Colonic mucosa (tissue), 4 donors: ENCODE measurements at regions of chr13 and their contacts with region 1.

Region 1: GRCh38 chr13:69579351-69579750 is 528.3 kb upstream of the ATXN8OS start:
- DNase-seq: no peak
- H3K4me3 ChIP-seq: no peak overlapping the region
- H3K27ac ChIP-seq: no peak overlapping the region
- H3K4me1 ChIP-seq: no peaks in the 10 kb centered on the region
- H3K27me3 ChIP-seq: no peaks in the 10 kb centered on the region
- CTCF ChIP-seq: peak; percentile 30

Region 2: GRCh38 chr13:68588623-68589022 is 990.7 kb before region 1 on chr13:
- intact Hi-C with region 1: no loop called
- DNase-seq: no peak
- H3K4me3 ChIP-seq: no peak overlapping the region
- H3K27ac ChIP-seq: no peak overlapping the region
- H3K4me1 ChIP-seq: no peaks in the 10 kb centered on the region
- H3K27me3 ChIP-seq: no peaks in the 10 kb centered on the region
- CTCF ChIP-seq: no peak

Region 3: GRCh38 chr13:69373747-69374425 is 205.5 kb before region 1 on chr13:
- intact Hi-C with region 1: no loop called
- DNase-seq: no peak
- H3K4me3 ChIP-seq: no peak overlapping the region
- H3K27ac ChIP-seq: no peak overlapping the region
- H3K4me1 ChIP-seq: no peaks in the 10 kb centered on the region
- H3K27me3 ChIP-seq: no peaks in the 10 kb centered on the region
- CTCF ChIP-seq: no peak

Region 4: GRCh38 chr13:69545551-69545950 is 33.8 kb before region 1 on chr13:
- intact Hi-C with region 1: no loop called
- DNase-seq: no peak
- H3K4me3 ChIP-seq: no peak overlapping the region
- H3K27ac ChIP-seq: no peak overlapping the region
- H3K4me1 ChIP-seq: no peaks in the 10 kb centered on the region
- H3K27me3 ChIP-seq: no peaks in the 10 kb centered on the region
- CTCF ChIP-seq: no peak

Region 5: DNA sequence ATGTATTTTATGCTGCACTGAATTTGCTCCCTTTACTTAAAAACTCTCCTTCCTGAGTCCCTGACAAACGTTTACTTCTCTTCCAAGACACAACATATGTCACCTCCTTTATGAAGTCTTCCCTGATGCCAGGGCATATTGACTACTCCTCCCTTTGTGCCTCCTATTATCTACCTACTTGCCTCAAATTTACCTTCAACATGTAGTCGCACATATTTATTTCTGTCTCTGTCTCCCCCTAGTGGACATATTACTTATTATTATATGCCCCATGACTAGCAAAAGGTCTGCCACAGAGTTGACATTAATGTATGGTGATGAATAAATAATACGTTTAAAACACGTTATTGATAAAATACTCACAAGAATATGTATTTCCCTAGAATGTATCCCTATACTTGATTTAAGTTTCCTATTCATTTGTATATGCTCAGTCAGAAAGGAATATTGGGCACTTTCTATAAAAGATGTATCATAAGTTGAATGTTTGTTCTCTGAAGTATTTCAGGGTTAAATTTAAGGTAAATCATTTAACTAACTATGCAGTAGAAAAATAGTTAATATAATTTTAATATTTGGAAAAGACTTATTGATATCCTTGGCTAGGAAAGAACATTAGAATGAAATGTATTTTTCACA is 278.0 kb after region 1 on chr13:
- intact Hi-C with region 1: loop called (anchors 5 kb)
- DNase-seq: no peak
- H3K4me3 ChIP-seq: no peak overlapping the region
- H3K27ac ChIP-seq: no peak overlapping the region
- H3K4me1 ChIP-seq: no peaks in the 10 kb centered on the region
- H3K27me3 ChIP-seq: no peaks in the 10 kb centered on the region
- CTCF ChIP-seq: peak; percentile 66